ENCODE measurements at regions of chr17 and their contacts with region 1.

Region 1: DNA sequence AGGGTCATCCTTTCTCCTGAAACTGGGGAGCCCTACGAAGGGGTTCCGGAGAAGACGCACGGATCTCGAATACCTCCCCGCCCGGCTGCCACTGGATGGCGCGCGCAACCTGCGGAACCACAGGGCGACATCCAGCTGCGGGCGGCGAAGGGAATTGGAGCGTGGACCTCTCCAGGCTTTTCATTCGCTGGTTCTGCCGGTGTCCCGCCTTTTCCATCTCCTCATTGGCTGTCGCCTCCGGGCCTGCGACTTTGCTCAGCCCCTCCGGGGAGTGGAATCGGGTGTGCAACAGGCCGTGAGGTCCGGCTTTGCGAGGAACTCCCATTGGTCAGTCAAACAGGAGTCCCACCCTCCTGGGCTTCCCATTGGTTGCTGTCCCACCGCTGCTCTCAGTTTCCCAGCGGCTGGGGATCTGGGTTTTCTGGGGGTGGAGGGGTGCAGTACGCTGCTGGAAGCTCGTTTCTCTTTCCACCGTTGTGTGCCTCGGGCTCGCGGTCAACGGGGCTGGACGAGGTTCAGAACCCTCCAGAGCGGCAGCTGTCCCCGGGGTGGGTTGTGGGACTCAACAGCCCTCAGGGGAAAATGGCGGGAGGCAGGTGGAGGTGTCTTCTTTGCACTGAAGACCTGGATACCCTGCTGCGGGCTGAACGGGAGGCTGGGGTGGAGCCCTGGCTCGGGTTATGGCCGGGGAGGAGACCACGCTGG is 14.5 kb downstream of the OR1D5 start:
- DNase-seq: peak; percentile 97 to 98
- H3K4me3 ChIP-seq: peak overlapping the region; percentile 62 to 66
- H3K27ac ChIP-seq: peak overlapping the region; percentile 25
- H3K4me1 ChIP-seq: peaks cover 8% of the 10 kb centered on the region
- H3K27me3 ChIP-seq: no peaks in the 10 kb centered on the region
- CTCF ChIP-seq: peak; percentile 43 to 62 (median 59)
- POLR2A ChIP-seq: no peak

Region 2: GRCh38 chr17:2971851-2972250 is 77.1 kb before region 1 on chr17:
- intact Hi-C with region 1: loop called (anchors 2 kb)
- DNase-seq: no peak
- H3K4me3 ChIP-seq: no peak overlapping the region
- H3K27ac ChIP-seq: no peak overlapping the region
- H3K4me1 ChIP-seq: no peaks in the 10 kb centered on the region
- H3K27me3 ChIP-seq: no peaks in the 10 kb centered on the region
- CTCF ChIP-seq: no peak
- POLR2A ChIP-seq: no peak

Measured in vagina (tissue), 2 donors.